GM18951 (cell line): ENCODE measurements at regions of chr4 and their contacts with region 1.

Region 1: GRCh38 chr4:118772081-118772766 is 63.7 kb downstream of the SEC24D start:
- POLR2A ChIP-seq: no peak

Region 2: GRCh38 chr4:118883861-118884260 is 111.6 kb after region 1 on chr4:
- in situ Hi-C with region 1: loop called (anchors 5 kb)
- POLR2A ChIP-seq: no peak

Region 3: DNA sequence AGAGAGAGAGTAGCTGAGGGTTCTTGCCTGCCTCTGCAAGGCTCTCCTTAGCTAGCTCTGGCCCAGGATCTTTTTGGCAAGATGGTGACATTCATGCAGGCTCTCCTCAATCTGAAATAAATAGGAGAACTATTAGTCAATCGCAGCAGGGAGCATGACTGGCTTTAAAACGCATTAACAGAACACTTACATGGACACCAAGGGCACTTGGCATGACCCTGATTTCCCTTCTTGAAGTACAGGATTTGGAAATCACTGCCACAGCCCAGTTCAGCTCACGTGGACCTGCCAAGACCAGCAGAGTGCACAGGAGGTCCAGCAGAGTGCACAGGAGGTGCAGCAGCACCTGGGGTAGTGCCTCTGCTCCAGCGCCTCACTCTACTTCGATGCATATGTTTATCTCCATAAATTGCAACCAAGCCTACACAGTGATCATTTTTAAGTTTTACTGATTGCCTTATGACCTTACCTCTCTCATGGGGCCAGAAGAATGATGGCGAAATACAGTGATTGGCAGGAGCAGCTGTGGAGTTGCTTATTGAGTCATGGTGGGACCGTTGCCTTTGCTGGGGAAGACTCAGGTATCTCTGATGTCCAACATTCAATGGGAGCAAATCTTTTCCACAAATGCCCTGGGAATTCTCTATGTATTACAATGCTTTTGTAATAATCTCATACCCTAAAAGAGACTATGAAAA is 238.8 kb after region 1 on chr4:
- in situ Hi-C with region 1: no loop called
- POLR2A ChIP-seq: no peak